Left ventricle myocardium superior (tissue), 1 donor: ENCODE measurements at regions of chr6 and their contacts with region 1.

Region 1: DNA sequence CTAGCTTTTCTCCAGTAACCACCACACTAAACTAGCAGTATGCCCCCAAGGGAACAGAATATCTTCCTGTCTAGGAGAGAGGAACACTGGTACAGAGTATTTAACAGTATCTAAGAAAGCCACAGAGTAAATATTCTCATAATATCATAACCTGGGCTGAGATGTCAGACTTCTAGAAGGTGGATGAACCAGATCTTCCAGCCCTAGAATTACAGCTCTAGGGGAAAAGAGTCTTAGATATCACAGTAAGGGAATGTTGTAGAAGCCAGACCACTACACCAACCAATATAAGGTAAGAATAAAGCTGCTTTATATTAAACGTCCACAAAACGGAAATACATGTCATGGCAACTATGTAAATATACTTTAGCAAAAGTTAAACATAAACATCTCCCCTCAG is 12.4 kb downstream of the SERINC1 start:
- DNase-seq: no peak
- ATAC-seq: no peak

Region 2: GRCh38 chr6:122361314-122361979 is 97.8 kb before region 1 on chr6:
- intact Hi-C with region 1: no loop called
- DNase-seq: no peak
- ATAC-seq: no peak

Region 3: GRCh38 chr6:122399384-122400158 is 59.6 kb before region 1 on chr6 and contains the start of gene HSF2:
- intact Hi-C with region 1: loop called (anchors 10 kb)
- DNase-seq: peak; percentile 97
- ATAC-seq: peak; percentile 99
- total RNA-seq, gene HSF2: 27.5 TPM

Region 4: GRCh38 chr6:123659960-123660748 is 1200.9 kb after region 1 on chr6:
- intact Hi-C with region 1: no loop called
- DNase-seq: no peak
- ATAC-seq: no peak